Activated CD8-positive, alpha-beta T cell treated with anti-CD3 and anti-CD28 coated beads, Interleukin-2, amount 10 ng/mL, durations not matched to agents 7 days and 5 days (primary cell): ENCODE measurements at regions of chr3 and their contacts with region 1.

Region 1: GRCh38 chr3:112734718-112735350 is 93.9 kb upstream of the CCDC80 start:
- DNase-seq: peak; percentile 83
- ATAC-seq: peak; percentile 75
- H3K4me3 Mint-ChIP-seq: no peak overlapping the region
- H3K27ac Mint-ChIP-seq: no peak overlapping the region
- H3K4me1 Mint-ChIP-seq: peaks cover 45% of the 10 kb centered on the region
- H3K27me3 Mint-ChIP-seq: no peaks in the 10 kb centered on the region

Region 2: GRCh38 chr3:112676659-112677234 is 58.1 kb before region 1 on chr3:
- CTCF ChIA-PET with region 1: interaction called, 11 read pairs
- POLR2A ChIA-PET with region 1: no interaction called
- DNase-seq: peak; percentile 93
- ATAC-seq: peak; percentile 94
- H3K4me3 Mint-ChIP-seq: peak overlapping the region; percentile 15
- H3K27ac Mint-ChIP-seq: peak overlapping the region; percentile 88
- H3K4me1 Mint-ChIP-seq: peaks cover 68% of the 10 kb centered on the region
- H3K27me3 Mint-ChIP-seq: no peaks in the 10 kb centered on the region

Region 3: DNA sequence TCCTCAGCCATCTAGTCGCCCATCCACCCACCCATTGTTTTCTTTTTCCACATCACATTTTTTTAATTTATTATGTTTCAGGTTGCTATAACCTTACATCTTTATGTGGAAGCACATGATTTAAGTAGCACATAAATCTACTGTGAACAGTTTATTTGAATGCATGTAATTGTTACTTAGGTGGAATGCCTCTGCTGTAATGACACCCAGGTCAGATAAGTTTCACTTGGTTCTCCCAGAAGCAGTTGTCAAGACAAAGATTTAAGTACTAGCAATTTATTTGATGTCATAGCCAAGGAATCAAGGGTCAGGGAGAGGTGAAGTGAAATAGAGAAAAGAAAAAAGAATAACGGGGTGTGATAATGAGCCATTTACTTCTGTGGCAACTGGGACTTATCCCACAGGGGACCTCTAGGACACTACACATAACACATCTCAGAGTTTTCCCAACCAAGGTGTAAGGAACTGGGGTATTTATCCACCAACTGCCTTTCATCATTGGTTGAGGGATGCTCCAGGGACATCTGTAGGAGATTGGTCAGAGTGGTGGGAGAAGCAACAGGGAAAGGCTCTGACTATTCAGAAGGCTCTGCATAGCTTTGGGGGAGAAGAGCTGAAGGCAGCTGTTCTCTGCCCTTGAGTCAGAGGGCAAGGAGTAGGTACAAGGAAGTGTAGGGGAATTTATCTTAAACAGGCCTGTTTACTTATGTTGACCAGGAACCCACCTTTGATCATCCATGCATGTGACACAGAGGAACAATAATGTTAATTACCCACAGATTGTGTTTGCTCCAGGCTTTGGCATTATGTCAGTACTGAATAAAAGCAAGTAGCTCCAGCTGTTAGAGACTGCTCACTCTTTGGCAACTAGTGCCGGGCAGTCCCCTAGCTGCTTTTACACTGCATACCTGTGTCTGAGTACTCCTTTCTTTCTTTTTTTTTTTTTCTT is 17.0 kb after region 1 on chr3:
- CTCF ChIA-PET with region 1: interaction called, 22 read pairs
- POLR2A ChIA-PET with region 1: interaction called, 3 read pairs
- DNase-seq: no peak
- ATAC-seq: no peak
- H3K4me3 Mint-ChIP-seq: no peak overlapping the region
- H3K27ac Mint-ChIP-seq: no peak overlapping the region
- H3K4me1 Mint-ChIP-seq: no peaks in the 10 kb centered on the region
- H3K27me3 Mint-ChIP-seq: no peaks in the 10 kb centered on the region

Region 4: GRCh38 chr3:112973325-112974177 is 238.7 kb after region 1 on chr3:
- CTCF ChIA-PET with region 1: interaction called, 118 read pairs
- POLR2A ChIA-PET with region 1: no interaction called
- DNase-seq: peak; percentile 60
- ATAC-seq: peak; percentile 89
- H3K4me3 Mint-ChIP-seq: peak overlapping the region; percentile 79
- H3K27ac Mint-ChIP-seq: peak overlapping the region; percentile 84
- H3K4me1 Mint-ChIP-seq: peaks cover 53% of the 10 kb centered on the region
- H3K27me3 Mint-ChIP-seq: no peaks in the 10 kb centered on the region

Region 5: DNA sequence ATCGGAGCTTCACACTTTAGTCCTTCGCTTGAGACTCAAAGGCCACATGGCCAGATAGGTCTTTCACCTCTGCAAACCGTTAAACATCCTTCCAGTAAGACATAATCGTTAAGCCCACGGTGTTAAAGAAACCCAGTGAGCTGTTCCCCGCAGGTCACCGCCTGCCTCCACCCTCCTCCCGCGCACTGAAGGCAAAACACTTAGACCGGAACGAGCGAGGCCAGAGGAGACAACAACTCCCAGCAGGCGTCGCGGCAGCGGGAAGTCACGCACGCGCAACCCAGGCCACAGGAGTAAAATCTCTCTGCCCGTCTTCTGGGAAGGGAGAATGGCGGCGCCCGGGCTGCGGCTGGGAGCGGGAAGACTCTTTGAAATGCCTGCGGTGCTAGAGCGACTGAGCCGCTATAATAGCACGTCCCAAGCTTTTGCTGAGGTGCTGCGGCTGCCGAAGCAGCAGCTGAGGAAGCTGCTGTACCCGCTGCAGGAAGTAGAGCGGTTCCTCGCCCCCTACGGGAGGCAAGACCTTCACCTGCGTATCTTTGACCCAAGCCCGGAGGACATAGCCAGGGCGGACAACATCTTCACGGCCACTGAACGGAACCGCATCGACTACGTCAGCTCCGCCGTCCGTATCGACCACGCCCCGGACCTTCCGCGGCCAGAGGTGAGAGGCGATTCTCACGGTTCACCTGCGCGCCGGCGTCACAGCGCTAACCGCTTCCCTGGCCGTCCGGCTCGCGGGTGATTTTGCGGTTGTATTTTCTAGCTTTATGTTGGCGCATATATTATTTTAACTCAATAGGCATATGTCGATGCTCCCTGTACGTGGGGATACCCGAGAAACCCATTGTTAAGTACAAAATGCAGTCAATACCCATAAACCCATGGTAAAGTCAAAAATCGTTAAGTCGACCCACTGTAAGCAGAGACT is 256.1 kb after region 1 on chr3 and contains the start of gene GTPBP8:
- CTCF ChIA-PET with region 1: interaction called, 16 read pairs
- POLR2A ChIA-PET with region 1: no interaction called
- DNase-seq: peak; percentile 90
- ATAC-seq: peak; percentile 95
- H3K4me3 Mint-ChIP-seq: peak within 1 kb of the TSS; percentile 93
- H3K27ac Mint-ChIP-seq: peak within 1 kb of the TSS; percentile 98
- H3K4me1 Mint-ChIP-seq: peaks cover 58% of the 10 kb centered on the region
- H3K27me3 Mint-ChIP-seq: no peaks in the 10 kb centered on the region
- total RNA-seq, gene GTPBP8: 24.3 to 24.5 TPM

Region 6: DNA sequence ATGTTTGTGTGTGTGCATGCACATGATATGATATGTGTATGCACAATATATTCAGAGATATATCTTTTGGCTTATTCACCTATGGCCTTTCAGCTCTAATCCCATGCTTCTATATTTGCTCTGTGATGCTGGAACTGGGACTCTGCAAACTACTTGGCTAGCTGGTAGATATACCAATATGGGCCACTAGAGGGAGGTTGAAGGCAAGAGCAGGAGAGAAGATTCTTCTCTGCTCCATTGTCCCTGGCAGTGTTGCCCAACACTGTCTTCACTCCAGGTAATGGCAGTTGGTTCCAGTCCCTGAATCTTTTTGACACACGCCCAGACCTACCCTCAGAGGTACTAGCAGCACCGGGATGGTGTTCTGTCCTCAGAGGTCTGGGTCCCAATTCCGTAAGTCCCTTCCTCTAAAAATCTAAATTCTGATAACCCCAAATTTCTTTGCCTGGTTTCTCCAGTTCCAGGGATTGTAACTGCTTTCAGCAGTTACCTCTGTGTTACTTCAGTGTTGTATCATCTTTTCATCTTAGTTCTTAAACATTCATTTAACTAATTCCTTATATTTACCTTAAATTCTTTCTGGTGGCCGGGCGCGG is 300.7 kb after region 1 on chr3:
- CTCF ChIA-PET with region 1: interaction called, 11 read pairs
- POLR2A ChIA-PET with region 1: no interaction called
- DNase-seq: peak; percentile 56
- ATAC-seq: peak; percentile 72
- H3K4me3 Mint-ChIP-seq: no peak overlapping the region
- H3K27ac Mint-ChIP-seq: no peak overlapping the region
- H3K4me1 Mint-ChIP-seq: no peaks in the 10 kb centered on the region
- H3K27me3 Mint-ChIP-seq: no peaks in the 10 kb centered on the region